Activated T-helper 1 cell treated with anti-CD3 and anti-CD28 coated beads, Interleukin-12 subunit alpha, Interleukin-12 subunit beta, Interleukin-2, Interleukin-4 antibody, amounts not matched to agents 30 ng/mL and 10 ng/mL and 1 ng/mL, durations not matched to agents 14 hours and 24 hours and 36 hours (primary cell): ENCODE measurements at regions of chr14 and their contacts with region 1.

Region 1: GRCh38 chr14:89430391-89431236 is 13.6 kb upstream of the FOXN3 start:
- DNase-seq: peak; percentile 42
- H3K4me3 Mint-ChIP-seq: peak overlapping the region; percentile 79
- H3K27ac Mint-ChIP-seq: peak overlapping the region; percentile 85
- H3K4me1 Mint-ChIP-seq: peaks cover 56% of the 10 kb centered on the region
- H3K27me3 Mint-ChIP-seq: no peaks in the 10 kb centered on the region

Region 2: GRCh38 chr14:89276424-89276975 is 154.1 kb before region 1 on chr14:
- intact Hi-C with region 1: loop called (anchors 1 kb)
- DNase-seq: peak; percentile 78
- H3K4me3 Mint-ChIP-seq: peak overlapping the region; percentile 70
- H3K27ac Mint-ChIP-seq: peak overlapping the region; percentile 98
- H3K4me1 Mint-ChIP-seq: peaks cover 79% of the 10 kb centered on the region
- H3K27me3 Mint-ChIP-seq: no peaks in the 10 kb centered on the region

Region 3: DNA sequence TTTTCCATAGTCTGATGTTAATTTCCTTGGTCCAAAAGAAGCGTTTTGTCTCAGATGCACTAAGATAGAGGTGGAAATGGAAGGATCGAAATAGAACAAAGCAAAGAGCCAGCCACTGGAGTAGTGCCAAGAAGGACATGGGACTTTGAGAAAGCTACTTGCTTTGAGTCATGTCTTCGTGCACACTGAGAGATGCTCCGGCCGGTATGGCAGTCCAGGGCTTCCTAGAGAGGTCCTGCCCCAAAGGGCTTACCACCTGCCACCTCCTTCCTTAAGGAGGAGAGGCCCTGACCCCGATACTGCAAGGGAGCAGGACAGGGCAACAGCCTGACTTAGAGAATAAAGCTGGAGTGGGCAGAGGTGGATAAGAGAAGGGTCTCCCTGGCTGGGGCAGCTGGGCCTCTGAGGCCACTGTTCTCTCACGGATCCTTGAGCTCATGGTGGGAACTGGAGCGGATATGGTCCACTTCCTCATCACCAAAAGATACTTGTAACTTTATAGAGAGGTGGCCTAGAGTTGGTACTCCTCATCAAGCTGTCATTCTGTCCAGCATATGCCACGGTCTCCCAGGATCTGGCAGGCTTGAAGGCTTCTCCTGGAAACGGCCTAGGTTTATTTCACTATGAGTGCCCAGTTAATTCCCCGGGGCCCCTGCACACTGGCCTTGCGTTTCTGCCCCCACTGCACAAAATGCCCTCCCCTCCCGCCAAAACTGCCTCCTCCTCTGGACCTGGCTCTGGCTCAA is 71.0 kb before region 1 on chr14:
- intact Hi-C with region 1: no loop called
- DNase-seq: no peak
- H3K4me3 Mint-ChIP-seq: no peak overlapping the region
- H3K27ac Mint-ChIP-seq: peak overlapping the region; percentile 65
- H3K4me1 Mint-ChIP-seq: peaks cover 28% of the 10 kb centered on the region
- H3K27me3 Mint-ChIP-seq: no peaks in the 10 kb centered on the region

Region 4: DNA sequence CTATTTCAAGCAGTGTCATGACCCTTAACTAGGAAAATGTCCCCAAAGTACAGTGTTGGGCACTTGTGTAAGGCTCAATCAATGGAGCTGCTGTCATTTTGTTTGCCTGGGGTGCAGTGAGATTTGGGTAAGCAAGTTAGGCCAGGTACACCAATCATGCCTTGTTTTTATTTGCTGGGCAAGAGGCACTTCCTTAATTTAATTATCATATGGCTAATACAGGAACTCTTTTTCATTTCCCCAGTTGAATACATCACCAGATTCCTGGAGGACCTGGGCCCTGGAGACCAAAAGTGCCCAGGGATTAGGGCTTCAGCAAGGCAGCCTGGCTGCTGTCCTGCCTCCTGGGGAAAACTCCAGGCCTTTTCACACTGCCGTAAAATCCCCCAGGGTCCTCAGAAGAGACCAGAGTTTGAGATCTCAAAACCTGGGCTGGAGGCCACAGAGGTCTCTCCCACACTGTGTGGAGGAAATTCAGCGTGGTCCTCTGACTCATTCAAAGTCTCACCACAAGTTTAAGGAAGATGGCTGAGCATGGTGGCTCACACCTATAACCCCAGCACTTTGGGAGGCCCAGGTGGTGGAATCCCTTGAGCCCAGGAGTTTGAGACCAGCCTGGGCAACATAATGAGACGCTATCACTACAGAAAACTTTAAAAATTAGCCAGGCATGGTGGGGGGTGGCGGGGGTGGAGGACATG is 14.8 kb after region 1 on chr14:
- intact Hi-C with region 1: loop called (anchors 1 kb)
- DNase-seq: peak; percentile 11
- H3K4me3 Mint-ChIP-seq: peak overlapping the region; percentile 37
- H3K27ac Mint-ChIP-seq: peak overlapping the region; percentile 83
- H3K4me1 Mint-ChIP-seq: peaks cover 54% of the 10 kb centered on the region
- H3K27me3 Mint-ChIP-seq: no peaks in the 10 kb centered on the region

Region 5: DNA sequence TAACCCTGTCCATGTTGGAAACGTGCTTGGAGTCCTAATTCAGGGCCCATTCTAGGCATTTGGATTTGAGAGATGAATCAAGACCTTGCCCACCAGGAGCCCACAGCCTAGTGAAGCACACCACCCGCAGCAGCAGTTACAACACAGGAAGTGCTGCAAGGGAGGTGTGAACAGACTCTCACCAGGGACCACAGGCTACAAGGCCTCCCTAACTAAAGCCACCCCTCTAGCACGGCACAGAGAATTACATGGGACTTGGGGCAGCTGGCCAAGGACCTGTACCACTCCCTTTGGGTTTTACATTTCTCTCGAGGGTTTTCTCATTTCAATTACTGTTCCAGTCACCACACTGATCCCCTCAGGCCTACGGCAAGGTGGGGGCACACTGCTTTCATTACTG is 35.9 kb after region 1 on chr14:
- intact Hi-C with region 1: no loop called
- DNase-seq: peak; percentile 21
- H3K4me3 Mint-ChIP-seq: peak overlapping the region; percentile 43
- H3K27ac Mint-ChIP-seq: peak overlapping the region; percentile 57
- H3K4me1 Mint-ChIP-seq: peaks cover 24% of the 10 kb centered on the region
- H3K27me3 Mint-ChIP-seq: no peaks in the 10 kb centered on the region

Region 6: DNA sequence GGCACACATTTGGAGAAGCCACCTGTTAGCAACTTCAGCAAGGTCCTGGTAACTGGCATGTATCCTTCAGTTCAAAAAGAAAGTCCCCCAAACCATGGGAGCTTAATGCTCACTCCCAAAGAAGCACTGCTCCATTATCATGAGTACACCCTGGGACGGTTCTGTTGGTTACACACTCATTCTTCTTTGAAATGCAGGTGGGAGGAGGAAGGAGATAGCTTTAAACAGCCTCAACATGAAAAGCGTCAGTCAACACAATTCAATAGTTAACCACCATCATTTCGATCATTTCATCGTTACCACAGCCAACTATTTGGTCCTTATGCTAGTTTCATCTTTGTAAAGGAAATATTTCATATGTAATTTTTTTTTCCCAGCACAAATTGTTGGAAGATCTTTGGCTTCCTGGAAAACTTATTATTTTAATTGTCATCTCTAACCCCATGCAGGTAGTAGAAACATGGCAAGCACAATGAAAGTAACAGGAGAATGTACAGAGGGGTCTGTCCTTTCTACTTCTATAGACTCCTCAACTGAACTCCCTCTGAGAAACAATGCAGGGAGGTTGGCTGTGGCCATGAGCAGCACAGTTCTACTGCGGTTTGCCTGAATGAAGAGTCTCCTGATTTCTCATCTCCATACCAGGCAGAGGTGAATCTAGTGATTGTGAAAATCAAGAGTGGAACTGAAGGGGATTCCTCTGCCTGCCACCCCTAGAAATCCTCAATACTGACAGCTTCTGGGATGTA is 182.8 kb after region 1 on chr14:
- intact Hi-C with region 1: loop called (anchors 1 kb)
- DNase-seq: no peak
- H3K4me3 Mint-ChIP-seq: peak overlapping the region; percentile 69
- H3K27ac Mint-ChIP-seq: peak overlapping the region; percentile 79
- H3K4me1 Mint-ChIP-seq: peaks cover 75% of the 10 kb centered on the region
- H3K27me3 Mint-ChIP-seq: no peaks in the 10 kb centered on the region

Region 7: GRCh38 chr14:89701211-89702043 is 270.8 kb after region 1 on chr14:
- intact Hi-C with region 1: loop called (anchors 5 kb)
- DNase-seq: peak; percentile 78
- H3K4me3 Mint-ChIP-seq: peak overlapping the region; percentile 70
- H3K27ac Mint-ChIP-seq: peak overlapping the region; percentile 84
- H3K4me1 Mint-ChIP-seq: peaks cover 51% of the 10 kb centered on the region
- H3K27me3 Mint-ChIP-seq: peaks cover 4% of the 10 kb centered on the region

Region 8: DNA sequence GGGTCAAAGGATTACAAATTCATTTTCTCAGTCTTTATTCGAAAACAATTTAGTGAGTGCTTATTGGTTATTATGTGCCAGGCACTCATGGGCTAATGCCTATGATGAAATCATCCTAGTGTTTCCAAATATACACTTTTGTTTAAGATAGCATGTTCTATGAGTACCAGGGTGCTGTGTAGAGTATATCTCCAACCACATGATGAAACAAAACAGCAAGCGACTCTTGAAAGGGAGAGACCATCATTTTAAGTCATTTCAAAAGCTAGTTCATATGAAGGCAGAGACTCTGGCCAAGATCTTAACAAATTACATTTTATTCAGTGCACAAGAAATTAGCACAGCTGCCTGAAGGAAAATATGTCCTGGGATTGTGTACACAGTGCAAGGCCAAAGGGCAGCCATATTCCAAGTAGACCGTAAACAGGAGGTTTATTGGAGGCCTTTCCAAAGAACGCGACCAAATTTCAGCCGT is 319.7 kb after region 1 on chr14:
- intact Hi-C with region 1: loop called (anchors 1 kb)
- DNase-seq: no peak
- H3K4me3 Mint-ChIP-seq: no peak overlapping the region
- H3K27ac Mint-ChIP-seq: no peak overlapping the region
- H3K4me1 Mint-ChIP-seq: peaks cover 23% of the 10 kb centered on the region
- H3K27me3 Mint-ChIP-seq: no peaks in the 10 kb centered on the region

Region 9: GRCh38 chr14:90288651-90289355 is 858.2 kb after region 1 on chr14:
- intact Hi-C with region 1: no loop called
- DNase-seq: no peak
- H3K4me3 Mint-ChIP-seq: no peak overlapping the region
- H3K27ac Mint-ChIP-seq: no peak overlapping the region
- H3K4me1 Mint-ChIP-seq: no peaks in the 10 kb centered on the region
- H3K27me3 Mint-ChIP-seq: no peaks in the 10 kb centered on the region